ENCODE measurements at regions of chr10 and their contacts with region 1.

Region 1: GRCh38 chr10:126041781-126042231 is 145.4 kb downstream of the FANK1 start:
- DNase-seq: peak; percentile 82
- ATAC-seq: peak; percentile 89
- H3K4me3 Mint-ChIP-seq: peak overlapping the region; percentile 78
- H3K27ac Mint-ChIP-seq: peak overlapping the region; percentile 100
- H3K4me1 Mint-ChIP-seq: peaks cover 69% of the 10 kb centered on the region
- H3K27me3 Mint-ChIP-seq: no peaks in the 10 kb centered on the region
- CTCF ChIP-seq: no peak

Region 2: DNA sequence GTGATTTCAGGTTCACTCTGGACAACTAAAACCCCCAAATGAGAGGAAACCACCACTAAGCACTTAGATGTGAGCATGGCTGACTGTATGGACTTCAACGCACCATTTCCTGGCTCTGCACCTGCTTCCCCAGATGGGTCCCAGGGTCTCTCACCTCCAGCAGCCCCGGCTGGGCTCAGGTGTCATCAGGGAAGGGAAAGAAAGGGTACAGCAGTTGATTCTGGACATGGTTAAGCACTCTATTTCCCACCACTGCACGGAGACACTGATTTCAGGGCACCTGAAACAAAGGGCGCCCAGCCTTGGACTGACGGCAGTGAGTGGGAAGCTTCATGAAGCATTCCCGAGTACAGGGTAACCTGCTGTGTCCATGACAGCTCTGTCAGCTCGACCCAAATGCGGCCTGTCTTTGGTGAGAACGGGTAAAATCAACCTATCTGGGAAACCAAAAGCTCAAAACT is 1316.6 kb before region 1 on chr10:
- CTCF ChIA-PET with region 1: no interaction called
- POLR2A ChIA-PET with region 1: no interaction called
- intact Hi-C with region 1: no loop called
- DNase-seq: peak; percentile 14
- ATAC-seq: no peak
- H3K4me3 Mint-ChIP-seq: peak overlapping the region; percentile 50
- H3K27ac Mint-ChIP-seq: peak overlapping the region; percentile 95
- H3K4me1 Mint-ChIP-seq: peaks cover 99% of the 10 kb centered on the region
- H3K27me3 Mint-ChIP-seq: no peaks in the 10 kb centered on the region
- CTCF ChIP-seq: no peak

Region 3: GRCh38 chr10:125719146-125720001 is 322.4 kb before region 1 on chr10 and contains the start of gene EDRF1:
- CTCF ChIA-PET with region 1: no interaction called
- POLR2A ChIA-PET with region 1: no interaction called
- intact Hi-C with region 1: loop called (anchors 2 kb)
- DNase-seq: peak; percentile 97
- ATAC-seq: peak; percentile 96
- H3K4me3 Mint-ChIP-seq: peak within 1 kb of the TSS; percentile 99
- H3K27ac Mint-ChIP-seq: peak within 1 kb of the TSS; percentile 96
- H3K4me1 Mint-ChIP-seq: peaks cover 29% of the 10 kb centered on the region
- H3K27me3 Mint-ChIP-seq: no peaks in the 10 kb centered on the region
- CTCF ChIP-seq: no peak
- total RNA-seq, gene EDRF1: 41.6 and 52.7 TPM in 2 replicates

Region 4: GRCh38 chr10:125982260-125982948 is 59.4 kb before region 1 on chr10:
- CTCF ChIA-PET with region 1: interaction called, 7 read pairs
- POLR2A ChIA-PET with region 1: interaction called, 9 read pairs
- intact Hi-C with region 1: loop called (anchors 1 kb)
- DNase-seq: peak; percentile 31
- ATAC-seq: peak; percentile 85
- H3K4me3 Mint-ChIP-seq: no peak overlapping the region
- H3K27ac Mint-ChIP-seq: peak overlapping the region; percentile 64
- H3K4me1 Mint-ChIP-seq: peaks cover 37% of the 10 kb centered on the region
- H3K27me3 Mint-ChIP-seq: peaks cover 5% of the 10 kb centered on the region
- CTCF ChIP-seq: no peak

Region 5: DNA sequence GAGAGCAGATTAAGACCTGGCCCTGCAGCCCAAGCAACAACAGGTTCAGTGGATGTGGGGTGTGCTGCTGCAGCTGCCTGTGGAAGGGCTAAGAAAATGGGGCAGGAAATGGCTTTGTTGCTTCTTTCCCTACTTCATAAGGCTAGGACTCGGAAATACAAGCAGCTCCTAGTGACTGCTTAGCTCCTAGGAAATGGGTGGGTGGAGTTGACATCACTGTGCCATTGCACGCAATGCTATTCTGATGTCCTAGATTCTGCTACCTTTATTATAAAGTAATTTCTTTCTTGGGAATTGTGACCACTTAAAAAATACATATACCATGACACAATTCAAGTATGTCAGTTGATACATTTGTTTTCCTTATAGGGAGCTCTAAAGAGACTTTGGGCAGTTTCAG is 10.4 kb after region 1 on chr10:
- CTCF ChIA-PET with region 1: no interaction called
- POLR2A ChIA-PET with region 1: no interaction called
- intact Hi-C with region 1: loop called (anchors 1 kb)
- DNase-seq: no peak
- ATAC-seq: no peak
- H3K4me3 Mint-ChIP-seq: no peak overlapping the region
- H3K27ac Mint-ChIP-seq: no peak overlapping the region
- H3K4me1 Mint-ChIP-seq: peaks cover 2% of the 10 kb centered on the region
- H3K27me3 Mint-ChIP-seq: peaks cover 11% of the 10 kb centered on the region
- CTCF ChIP-seq: no peak

Region 6: GRCh38 chr10:126101801-126102200 is 60.0 kb after region 1 on chr10:
- CTCF ChIA-PET with region 1: interaction called, 3 read pairs
- POLR2A ChIA-PET with region 1: interaction called, 10 read pairs
- intact Hi-C with region 1: loop called (anchors 1 kb)
- DNase-seq: peak; percentile 21
- ATAC-seq: peak; percentile 93
- H3K4me3 Mint-ChIP-seq: no peak overlapping the region
- H3K27ac Mint-ChIP-seq: peak overlapping the region; percentile 65
- H3K4me1 Mint-ChIP-seq: peaks cover 21% of the 10 kb centered on the region
- H3K27me3 Mint-ChIP-seq: no peaks in the 10 kb centered on the region
- CTCF ChIP-seq: no peak

Region 7: DNA sequence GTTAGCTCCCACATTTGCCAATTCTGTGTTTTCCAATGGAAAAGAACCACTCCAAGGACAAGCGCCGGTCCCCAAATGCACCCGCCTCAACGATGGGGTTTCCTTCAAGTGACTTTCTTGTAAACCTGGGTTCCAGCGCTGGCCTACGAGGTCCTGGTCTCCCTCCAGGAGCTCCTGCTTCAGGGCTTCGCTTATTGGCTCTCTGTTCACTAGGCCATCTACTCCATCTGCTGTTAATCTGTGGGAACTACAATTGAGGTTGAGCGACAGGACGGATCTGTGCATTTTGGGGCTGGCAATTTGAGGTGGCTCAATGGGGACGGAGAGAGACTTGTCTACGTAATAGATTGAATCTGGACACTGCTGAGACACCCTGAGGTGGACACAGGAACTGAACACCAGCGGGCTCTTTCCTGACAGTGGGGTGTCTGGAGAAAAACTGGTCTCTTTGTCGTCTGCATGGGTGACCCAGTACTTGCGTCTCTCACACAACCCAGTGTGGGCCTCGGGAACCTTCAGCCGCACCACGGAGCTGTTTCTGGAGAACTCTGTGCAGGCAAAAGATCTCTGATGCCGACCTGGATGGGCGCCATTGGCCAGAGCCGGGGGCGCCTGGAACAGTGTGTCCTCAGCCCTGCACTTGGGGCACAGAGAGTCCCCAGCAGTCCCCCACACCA is 462.4 kb after region 1 on chr10:
- CTCF ChIA-PET with region 1: no interaction called
- POLR2A ChIA-PET with region 1: no interaction called
- intact Hi-C with region 1: loop called (anchors 1 kb)
- DNase-seq: no peak
- ATAC-seq: peak; percentile 57
- H3K4me3 Mint-ChIP-seq: no peak overlapping the region
- H3K27ac Mint-ChIP-seq: no peak overlapping the region
- H3K4me1 Mint-ChIP-seq: no peaks in the 10 kb centered on the region
- H3K27me3 Mint-ChIP-seq: no peaks in the 10 kb centered on the region
- CTCF ChIP-seq: no peak